WTC11 (cell line): ENCODE measurements at regions of chr1 and their contacts with region 1.

Region 1: GRCh38 chr1:16078925-16079656 is 5.6 kb upstream of the FAM131C start:
- DNase-seq: peak; percentile 89
- ATAC-seq: peak; percentile 78
- H3K4me3 Mint-ChIP-seq: no peak overlapping the region
- H3K27ac Mint-ChIP-seq: no peak overlapping the region
- H3K4me1 Mint-ChIP-seq: peaks cover 9% of the 10 kb centered on the region
- H3K27me3 Mint-ChIP-seq: peaks cover 26% of the 10 kb centered on the region
- CTCF ChIP-seq: peak; percentile 87

Region 2: DNA sequence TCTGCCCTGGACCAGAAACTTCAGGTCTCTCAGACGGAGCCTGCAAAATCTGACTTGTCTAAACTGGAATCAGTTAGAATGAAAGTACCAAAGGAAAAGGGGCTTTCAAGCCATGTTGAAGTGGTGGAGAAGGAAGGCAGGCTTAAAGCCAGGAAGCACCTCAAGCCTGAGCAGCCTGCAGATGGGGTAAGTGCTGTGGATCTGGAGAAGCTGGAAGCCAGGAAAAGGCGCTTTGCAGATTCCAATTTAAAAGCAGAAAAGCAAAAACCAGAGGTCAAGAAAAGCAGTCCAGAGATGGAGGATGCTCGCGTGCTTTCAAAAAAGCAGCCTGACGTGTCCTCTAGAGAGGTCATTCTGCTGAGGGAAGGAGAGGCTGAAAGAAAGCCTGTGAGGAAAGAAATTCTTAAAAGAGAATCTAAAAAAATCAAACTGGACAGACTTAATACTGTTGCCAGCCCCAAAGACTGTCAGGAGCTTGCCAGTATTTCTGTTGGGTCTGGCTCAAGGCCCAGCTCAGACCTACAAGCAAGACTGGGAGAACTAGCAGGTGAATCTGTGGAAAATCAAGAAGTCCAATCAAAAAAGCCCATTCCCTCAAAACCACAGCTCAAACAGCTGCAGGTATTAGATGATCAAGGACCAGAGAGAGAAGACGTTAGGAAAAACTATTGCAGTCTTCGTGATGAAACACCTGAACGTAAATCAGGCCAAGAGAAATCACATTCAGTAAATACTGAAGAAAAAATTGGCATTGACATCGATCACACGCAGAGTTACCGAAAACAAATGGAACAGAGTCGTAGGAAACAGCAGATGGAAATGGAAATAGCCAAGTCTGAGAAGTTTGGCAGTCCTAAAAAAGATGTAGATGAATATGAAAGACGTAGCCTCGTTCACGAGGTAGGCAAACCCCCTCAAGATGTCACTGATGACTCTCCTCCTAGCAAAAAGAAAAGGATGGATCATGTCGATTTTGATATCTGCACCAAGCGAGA is 149.8 kb before region 1 on chr1:
- CTCF ChIA-PET with region 1: no interaction called
- POLR2A ChIA-PET with region 1: no interaction called
- DNase-seq: no peak
- ATAC-seq: no peak
- H3K4me3 Mint-ChIP-seq: no peak overlapping the region
- H3K27ac Mint-ChIP-seq: no peak overlapping the region
- H3K4me1 Mint-ChIP-seq: peaks cover 5% of the 10 kb centered on the region; the same call in 1 of the 2 replicates
- H3K27me3 Mint-ChIP-seq: no peaks in the 10 kb centered on the region
- CTCF ChIP-seq: no peak

Region 3: GRCh38 chr1:16091296-16091695 is 12.2 kb after region 1 on chr1:
- CTCF ChIA-PET with region 1: interaction called, 50 read pairs
- POLR2A ChIA-PET with region 1: no interaction called
- DNase-seq: no peak
- ATAC-seq: no peak
- H3K4me3 Mint-ChIP-seq: no peak overlapping the region
- H3K27ac Mint-ChIP-seq: no peak overlapping the region
- H3K4me1 Mint-ChIP-seq: peaks cover 13% of the 10 kb centered on the region; the same call in 1 of the 2 replicates
- H3K27me3 Mint-ChIP-seq: no peaks in the 10 kb centered on the region
- CTCF ChIP-seq: no peak

Region 4: DNA sequence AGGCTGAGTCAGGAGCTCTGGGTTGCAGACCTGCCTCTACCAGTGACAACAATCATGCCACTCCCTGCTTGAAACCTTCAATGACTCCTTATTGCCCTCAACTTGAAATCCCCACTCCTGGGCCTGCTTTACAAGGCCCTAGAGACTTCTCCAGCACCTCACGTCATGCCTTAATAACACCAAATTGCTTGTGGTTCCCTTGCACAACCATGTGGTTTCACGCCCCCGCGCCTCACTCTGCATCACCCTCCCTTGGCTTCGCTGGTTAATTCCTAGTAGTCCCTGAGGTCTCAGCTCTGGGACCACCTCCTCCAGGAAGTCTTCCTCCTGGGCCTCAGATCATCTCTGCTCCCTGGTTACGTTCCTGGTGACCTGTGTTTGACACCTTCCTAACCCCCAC is 43.8 kb after region 1 on chr1:
- CTCF ChIA-PET with region 1: interaction called, 61 read pairs
- POLR2A ChIA-PET with region 1: no interaction called
- DNase-seq: no peak
- ATAC-seq: no peak
- H3K4me3 Mint-ChIP-seq: no peak overlapping the region
- H3K27ac Mint-ChIP-seq: peak overlapping the region; percentile 87
- H3K4me1 Mint-ChIP-seq: peaks cover 45% of the 10 kb centered on the region
- H3K27me3 Mint-ChIP-seq: no peaks in the 10 kb centered on the region
- CTCF ChIP-seq: no peak

Region 5: DNA sequence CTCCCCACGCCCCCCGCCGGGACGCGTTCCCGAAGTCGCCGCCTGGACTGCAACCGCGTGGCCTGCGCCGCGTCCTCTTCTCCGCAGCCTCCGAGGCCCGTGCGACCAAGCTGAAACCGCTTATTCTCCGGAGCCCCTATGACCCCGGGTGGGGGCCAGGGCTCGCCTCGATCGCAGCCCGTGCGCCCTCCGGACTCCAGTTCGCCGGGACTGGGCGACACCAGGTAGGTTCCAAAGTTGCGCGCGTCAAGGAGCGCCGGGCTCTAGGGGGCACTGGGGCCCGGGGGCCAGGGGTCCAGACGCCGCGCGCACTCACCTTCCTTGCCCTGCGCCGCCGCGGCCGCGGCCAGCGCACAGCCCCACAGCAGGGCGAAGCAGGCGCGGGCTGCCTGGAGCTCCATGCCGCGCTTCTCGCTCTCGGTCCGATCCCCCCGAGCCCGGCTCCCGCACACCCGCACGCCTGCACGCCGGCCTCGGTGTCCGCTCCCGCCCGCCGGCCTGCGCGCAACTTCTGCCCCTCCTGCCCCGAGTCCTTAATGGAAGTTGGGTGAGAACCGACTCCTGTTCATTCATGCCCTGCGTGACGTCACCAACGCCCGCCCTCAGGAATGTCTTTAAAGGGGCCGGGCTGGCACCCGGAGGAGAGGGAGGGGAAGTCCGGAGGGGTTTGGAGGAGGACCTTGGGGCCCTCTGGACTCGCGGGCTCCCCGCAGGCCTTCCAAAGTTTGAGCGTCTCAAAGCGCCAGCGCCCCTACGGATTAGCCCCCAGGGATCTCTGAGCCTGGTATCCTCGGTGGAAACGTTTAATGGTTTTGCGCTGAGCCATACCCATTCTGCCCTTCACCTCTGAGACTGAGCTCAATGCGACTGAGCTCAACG is 76.7 kb after region 1 on chr1 and contains the start of gene EPHA2:
- CTCF ChIA-PET with region 1: interaction called, 204 read pairs
- POLR2A ChIA-PET with region 1: interaction called, 4 read pairs
- DNase-seq: peak; percentile 97
- ATAC-seq: peak; percentile 74
- H3K4me3 Mint-ChIP-seq: peak within 1 kb of the TSS; percentile 86
- H3K27ac Mint-ChIP-seq: peak within 1 kb of the TSS; percentile 94
- H3K4me1 Mint-ChIP-seq: peaks cover 45% of the 10 kb centered on the region
- H3K27me3 Mint-ChIP-seq: no peaks in the 10 kb centered on the region
- CTCF ChIP-seq: no peak
- total RNA-seq, gene EPHA2: 31.4 to 44.4 TPM (median 31.7 TPM) in 3 replicates

Region 6: GRCh38 chr1:16181887-16182719 is 103.0 kb after region 1 on chr1:
- CTCF ChIA-PET with region 1: interaction called, 74 read pairs
- POLR2A ChIA-PET with region 1: no interaction called
- DNase-seq: peak; percentile 70
- ATAC-seq: peak; percentile 94
- H3K4me3 Mint-ChIP-seq: no peak overlapping the region
- H3K27ac Mint-ChIP-seq: peak overlapping the region; percentile 94
- H3K4me1 Mint-ChIP-seq: peaks cover 13% of the 10 kb centered on the region
- H3K27me3 Mint-ChIP-seq: no peaks in the 10 kb centered on the region; the same call in 1 of the 2 replicates
- CTCF ChIP-seq: no peak

Region 7: GRCh38 chr1:16217061-16217785 is 138.1 kb after region 1 on chr1:
- CTCF ChIA-PET with region 1: interaction called, 17 read pairs
- POLR2A ChIA-PET with region 1: interaction called, 3 read pairs
- DNase-seq: peak; percentile 100
- ATAC-seq: peak; percentile 87
- H3K4me3 Mint-ChIP-seq: peak overlapping the region; percentile 92
- H3K27ac Mint-ChIP-seq: no peak overlapping the region
- H3K4me1 Mint-ChIP-seq: peaks cover 26% of the 10 kb centered on the region
- H3K27me3 Mint-ChIP-seq: peaks cover 36% of the 10 kb centered on the region
- CTCF ChIP-seq: no peak

Region 8: GRCh38 chr1:16366722-16367257 is 287.7 kb after region 1 on chr1 and contains the start of gene SZRD1:
- CTCF ChIA-PET with region 1: interaction called, 10 read pairs
- POLR2A ChIA-PET with region 1: no interaction called
- DNase-seq: peak; percentile 92
- ATAC-seq: peak; percentile 91
- H3K4me3 Mint-ChIP-seq: peak within 1 kb of the TSS; percentile 94
- H3K27ac Mint-ChIP-seq: peak within 1 kb of the TSS; percentile 97
- H3K4me1 Mint-ChIP-seq: peaks cover 17% of the 10 kb centered on the region
- H3K27me3 Mint-ChIP-seq: peaks cover 4% of the 10 kb centered on the region
- CTCF ChIP-seq: no peak
- total RNA-seq, gene SZRD1: 94.9 to 113 TPM (median 104 TPM) in 3 replicates